Caco-2 (cell line): ENCODE measurements at regions of chr2 and their contacts with region 1.

Region 1: DNA sequence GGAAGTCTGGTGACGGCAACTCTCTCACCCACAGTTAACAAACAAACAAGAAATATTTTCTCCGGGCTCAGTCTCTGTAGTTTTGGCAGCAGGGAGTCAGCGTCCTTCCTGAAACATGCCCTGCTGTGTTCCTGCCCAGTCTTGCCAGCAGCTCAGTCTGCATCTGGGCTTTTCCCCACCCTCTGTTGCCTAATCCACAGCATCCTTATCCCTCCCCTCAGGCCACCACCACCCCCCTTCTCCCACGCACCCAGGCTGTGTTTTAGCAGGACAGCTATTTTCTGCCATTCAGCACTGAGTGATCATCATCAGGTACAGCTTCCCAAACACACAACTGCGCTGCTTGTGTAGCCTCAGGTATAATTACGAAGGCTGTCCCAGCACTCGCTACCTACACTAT is 168.2 kb downstream of the DPP10 start:
- DNase-seq: no peak
- H3K4me3 ChIP-seq: no peak overlapping the region
- H3K4me3 Mint-ChIP-seq: no peak overlapping the region
- H3K27ac Mint-ChIP-seq: no peak overlapping the region
- H3K4me1 ChIP-seq: no peaks in the 10 kb centered on the region
- H3K4me1 Mint-ChIP-seq: no peaks in the 10 kb centered on the region
- H3K27me3 ChIP-seq: no peaks in the 10 kb centered on the region
- H3K27me3 Mint-ChIP-seq: peaks cover 9% of the 10 kb centered on the region
- CTCF ChIP-seq: no peak

Region 2: GRCh38 chr2:114628481-114628880 is 17.8 kb after region 1 on chr2:
- CTCF ChIA-PET with region 1: no interaction called
- POLR2A ChIA-PET with region 1: no interaction called
- intact Hi-C with region 1: no loop called
- DNase-seq: peak in 1 of 2 experiments; percentile 40
- H3K4me3 ChIP-seq: no peak overlapping the region
- H3K4me3 Mint-ChIP-seq: peak overlapping the region; percentile 55
- H3K27ac Mint-ChIP-seq: peak overlapping the region; percentile 39
- H3K4me1 ChIP-seq: peaks cover 14% of the 10 kb centered on the region; the same call in 1 of the 2 replicates
- H3K4me1 Mint-ChIP-seq: peaks cover 19% of the 10 kb centered on the region
- H3K27me3 ChIP-seq: no peaks in the 10 kb centered on the region
- H3K27me3 Mint-ChIP-seq: no peaks in the 10 kb centered on the region
- CTCF ChIP-seq: no peak

Region 3: GRCh38 chr2:114940785-114941458 is 330.2 kb after region 1 on chr2:
- CTCF ChIA-PET with region 1: no interaction called
- POLR2A ChIA-PET with region 1: no interaction called
- intact Hi-C with region 1: loop called (anchors 5 kb)
- DNase-seq: no peak
- H3K4me3 ChIP-seq: no peak overlapping the region
- H3K4me3 Mint-ChIP-seq: no peak overlapping the region
- H3K27ac Mint-ChIP-seq: no peak overlapping the region
- H3K4me1 ChIP-seq: no peaks in the 10 kb centered on the region
- H3K4me1 Mint-ChIP-seq: no peaks in the 10 kb centered on the region
- H3K27me3 ChIP-seq: no peaks in the 10 kb centered on the region
- H3K27me3 Mint-ChIP-seq: no peaks in the 10 kb centered on the region
- CTCF ChIP-seq: no peak

Region 4: DNA sequence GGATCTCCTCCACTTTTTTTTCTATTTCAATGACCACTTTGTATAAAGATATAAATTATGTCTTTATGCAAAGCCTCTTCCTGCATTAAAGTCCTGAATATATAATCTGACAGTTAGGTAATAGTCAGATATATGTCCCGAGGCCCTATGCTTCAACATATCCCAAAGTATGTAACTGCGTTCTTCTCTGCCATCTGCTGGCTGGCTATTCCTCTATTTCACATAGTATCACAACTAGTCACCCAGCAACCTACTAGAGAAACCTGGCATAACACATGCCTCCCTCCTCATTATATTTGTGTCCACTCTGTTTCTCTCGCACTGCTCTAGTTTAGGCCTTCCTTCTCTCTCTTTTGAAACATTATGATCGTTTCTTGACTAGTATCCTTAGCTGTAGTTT is 472.5 kb after region 1 on chr2:
- CTCF ChIA-PET with region 1: no interaction called
- POLR2A ChIA-PET with region 1: no interaction called
- intact Hi-C with region 1: loop called (anchors 1 kb)
- DNase-seq: peak in 1 of 2 experiments; percentile 40
- H3K4me3 ChIP-seq: no peak overlapping the region
- H3K4me3 Mint-ChIP-seq: no peak overlapping the region
- H3K27ac Mint-ChIP-seq: no peak overlapping the region
- H3K4me1 ChIP-seq: no peaks in the 10 kb centered on the region
- H3K4me1 Mint-ChIP-seq: no peaks in the 10 kb centered on the region
- H3K27me3 ChIP-seq: no peaks in the 10 kb centered on the region
- H3K27me3 Mint-ChIP-seq: no peaks in the 10 kb centered on the region
- CTCF ChIP-seq: peak; percentile 42 to 54